ENCODE measurements at regions of chr19 and their contacts with region 1.

Region 1: GRCh38 chr19:41439441-41440222 is at the start of gene DMAC2:
- DNase-seq: peak; percentile 98
- ATAC-seq: peak; percentile 94
- H3K4me3 ChIP-seq: peak within 1 kb of the TSS; percentile 71 to 94 (median 77)
- H3K27ac ChIP-seq: peak within 1 kb of the TSS; percentile 95
- H3K4me1 ChIP-seq: peaks cover 45% of the 10 kb centered on the region
- H3K27me3 ChIP-seq: no peaks in the 10 kb centered on the region
- CTCF ChIP-seq: peak; percentile 83
- EP300 ChIP-seq: no peak
- POLR2A ChIP-seq: peak; percentile 84 to 91
- RAD21 ChIP-seq: peak; percentile 28; the same call in 1 of the 2 replicates
- total RNA-seq, gene DMAC2: 39.0 and 51.9 TPM in 2 replicates

Region 2: GRCh38 chr19:41409288-41409687 is 30.3 kb before region 1 on chr19:
- CTCF ChIA-PET with region 1: no interaction called
- POLR2A ChIA-PET with region 1: interaction called, 15 read pairs
- in situ Hi-C with region 1: no loop called
- intact Hi-C with region 1: no loop called
- DNase-seq: peak; percentile 92
- ATAC-seq: peak; percentile 97
- H3K4me3 ChIP-seq: peak overlapping the region in 2 of 3 experiments; percentile 15 to 35; a peak in 1 of 6 replicates
- H3K27ac ChIP-seq: peak overlapping the region; percentile 74
- H3K4me1 ChIP-seq: peaks cover 30% of the 10 kb centered on the region
- H3K27me3 ChIP-seq: no peaks in the 10 kb centered on the region
- CTCF ChIP-seq: no peak
- EP300 ChIP-seq: no peak
- POLR2A ChIP-seq: peak in 1 of 2 experiments; percentile 46; a peak in 2 of 4 replicates
- RAD21 ChIP-seq: no peak

Region 3: DNA sequence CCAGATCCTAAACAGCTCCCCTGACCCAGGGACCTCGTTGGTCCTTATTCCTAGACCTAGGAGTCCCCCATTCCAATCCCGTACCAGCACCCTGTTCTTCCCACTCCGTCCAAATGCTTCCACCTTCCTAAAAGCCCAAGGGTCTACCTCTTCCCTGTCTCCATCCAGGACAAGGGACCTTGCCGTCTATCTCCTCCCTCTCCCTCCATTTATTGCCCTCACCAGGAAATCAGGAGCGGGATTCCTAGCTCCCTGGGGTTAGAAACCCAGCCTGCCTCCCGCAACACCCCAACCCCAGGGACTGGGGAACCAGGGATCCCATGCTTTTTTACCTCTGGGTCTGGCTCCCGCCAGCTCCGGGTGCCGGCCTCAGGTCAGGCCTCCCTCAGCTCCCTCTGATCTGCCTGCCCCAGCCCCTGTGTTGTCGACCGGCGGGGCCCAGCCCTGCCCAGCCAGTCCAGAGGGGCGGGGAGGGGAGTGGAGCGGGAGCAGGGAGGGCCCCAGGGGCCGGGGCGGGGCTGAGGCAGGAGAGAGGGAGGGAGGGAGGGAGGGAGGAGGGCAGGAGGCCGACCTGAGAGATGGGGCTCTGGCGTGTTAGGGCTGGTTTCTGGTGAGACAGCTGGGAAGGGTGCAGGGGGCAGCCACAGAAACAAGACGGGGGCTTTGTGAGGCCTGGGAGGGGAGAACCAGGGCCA is 12.5 kb before region 1 on chr19 and contains the start of gene B3GNT8:
- CTCF ChIA-PET with region 1: no interaction called
- POLR2A ChIA-PET with region 1: interaction called, 55 read pairs
- in situ Hi-C with region 1: no loop called
- intact Hi-C with region 1: no loop called
- DNase-seq: peak; percentile 59
- ATAC-seq: peak; percentile 92
- H3K4me3 ChIP-seq: peak within 1 kb of the TSS; percentile 62 to 76 (median 64)
- H3K27ac ChIP-seq: peak within 1 kb of the TSS; percentile 48
- H3K4me1 ChIP-seq: peaks cover 52% of the 10 kb centered on the region
- H3K27me3 ChIP-seq: no peaks in the 10 kb centered on the region
- CTCF ChIP-seq: no peak
- EP300 ChIP-seq: no peak
- POLR2A ChIP-seq: peak; percentile 44 to 60; a peak in 3 of 4 replicates
- RAD21 ChIP-seq: no peak
- total RNA-seq, gene B3GNT8: 1.9 and 2.3 TPM in 2 replicates

Region 4: DNA sequence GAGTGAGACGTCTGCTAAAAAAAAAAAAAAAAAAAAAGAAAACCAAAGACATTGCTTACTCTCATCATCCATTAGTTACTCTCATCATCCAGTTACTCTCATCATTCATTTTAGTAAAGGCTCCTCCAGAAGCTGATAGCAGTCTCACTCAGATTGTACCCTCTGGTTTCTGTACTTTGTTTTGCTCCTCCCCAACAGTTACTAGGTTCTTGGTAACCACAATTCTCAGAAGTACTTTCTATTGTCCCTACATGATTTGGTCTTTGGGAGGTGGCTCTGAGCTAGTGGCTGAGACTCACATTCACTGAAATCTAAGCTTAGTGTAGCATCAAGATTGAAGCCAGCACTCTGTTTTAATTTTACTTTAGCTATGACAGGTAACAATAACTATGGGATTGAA is 17.6 kb after region 1 on chr19:
- CTCF ChIA-PET with region 1: no interaction called
- POLR2A ChIA-PET with region 1: no interaction called
- in situ Hi-C with region 1: no loop called
- intact Hi-C with region 1: no loop called
- DNase-seq: no peak
- ATAC-seq: no peak
- H3K4me3 ChIP-seq: no peak overlapping the region
- H3K27ac ChIP-seq: no peak overlapping the region
- H3K4me1 ChIP-seq: no peaks in the 10 kb centered on the region
- H3K27me3 ChIP-seq: no peaks in the 10 kb centered on the region; a peak in 1 of 5 replicates
- CTCF ChIP-seq: no peak
- EP300 ChIP-seq: no peak
- POLR2A ChIP-seq: no peak
- RAD21 ChIP-seq: no peak

Region 5: GRCh38 chr19:41563854-41564514 is 124.4 kb after region 1 on chr19:
- CTCF ChIA-PET with region 1: no interaction called
- POLR2A ChIA-PET with region 1: interaction called, 12 read pairs
- in situ Hi-C with region 1: loop called (anchors 5 kb)
- intact Hi-C with region 1: no loop called
- DNase-seq: no peak
- ATAC-seq: no peak; the same call in 1 of the 3 replicates
- H3K4me3 ChIP-seq: peak overlapping the region in 1 of 3 experiments; percentile 40; a peak in 1 of 6 replicates
- H3K27ac ChIP-seq: no peak overlapping the region
- H3K4me1 ChIP-seq: peaks cover 13% of the 10 kb centered on the region
- H3K27me3 ChIP-seq: peaks cover 3 to 27% of the 10 kb centered on the region in 2 experiments; a peak in 3 of 5 replicates
- CTCF ChIP-seq: no peak
- EP300 ChIP-seq: no peak
- POLR2A ChIP-seq: no peak
- RAD21 ChIP-seq: no peak

Measured in HepG2 (cell line).